Dorsolateral prefrontal cortex (tissue), 120 donors: ENCODE measurements at regions of chr14 and their contacts with region 1.

Region 1: GRCh38 chr14:101964297-101965144 is at the start of gene DYNC1H1:
- DNase-seq: peak; percentile 91 to 97 (median 94)
- H3K4me3 ChIP-seq: peak within 1 kb of the TSS; percentile 75 to 100 (median 98)
- H3K27ac ChIP-seq: peak within 1 kb of the TSS; percentile 82 to 100 (median 97)
- H3K27me3 ChIP-seq: no peaks in the 10 kb centered on the region
- CTCF ChIP-seq: peak in 7 of 56 donors; percentile 5 to 20 (median 10)
- total RNA-seq, gene DYNC1H1: 740 to 1,310 (median 1,110) TPM

Region 2: GRCh38 chr14:100761481-100761880 is 1203.0 kb before region 1 on chr14:
- intact Hi-C with region 1: no loop called
- DNase-seq: no peak
- H3K4me3 ChIP-seq: no peak overlapping the region
- H3K27ac ChIP-seq: no peak overlapping the region
- H3K27me3 ChIP-seq: peaks cover 0 to 19% (median 0%) of the 10 kb centered on the region in 45 donors
- CTCF ChIP-seq: no peak

Region 3: DNA sequence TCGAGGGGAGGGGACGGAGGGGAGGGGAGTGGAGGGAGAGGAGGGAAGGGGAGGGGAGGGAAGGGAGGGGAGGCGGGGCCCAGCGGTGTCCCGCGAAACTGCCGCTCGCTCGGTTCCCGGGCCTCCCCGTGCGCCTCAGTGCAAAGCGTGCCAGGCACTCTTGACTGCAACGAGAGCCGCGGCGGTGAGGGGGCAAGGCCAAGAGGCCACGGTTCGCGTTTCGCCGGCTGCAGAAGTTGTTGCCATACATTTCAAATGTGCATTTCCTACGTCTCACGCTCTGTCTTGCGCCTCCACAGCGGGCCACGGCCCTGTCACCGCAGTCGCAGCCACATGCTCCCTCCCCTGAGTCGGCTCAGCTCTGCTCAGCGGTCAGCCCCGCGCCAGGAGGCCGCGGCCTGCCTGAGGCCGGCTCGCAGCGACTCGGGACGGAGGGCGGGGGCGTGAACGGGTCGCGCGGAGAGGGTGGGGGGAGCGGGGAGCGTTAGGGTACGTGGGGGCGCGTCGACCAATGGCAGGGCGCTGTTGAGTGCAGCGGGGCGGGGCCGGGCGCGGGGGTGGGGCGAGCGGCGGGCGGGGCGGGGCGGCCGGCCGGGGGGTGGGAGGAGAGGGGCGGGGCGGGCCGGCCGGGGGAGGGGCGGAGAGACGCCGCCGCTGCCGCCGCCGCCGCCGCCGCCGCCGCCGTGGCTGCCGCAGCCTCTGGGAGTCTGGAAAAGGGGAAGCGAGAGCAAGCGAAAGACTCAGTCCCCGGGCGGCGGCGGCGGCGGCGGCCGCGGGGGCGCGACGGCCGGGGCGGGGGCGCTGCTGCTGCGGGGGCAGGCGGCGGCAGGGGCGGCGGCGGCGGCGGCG is 203.3 kb before region 1 on chr14 and contains the start of gene PPP2R5C:
- intact Hi-C with region 1: loop called in 1 of 2 experiments (anchors 5 kb)
- DNase-seq: peak; percentile 82 to 93 (median 90)
- H3K4me3 ChIP-seq: peak within 1 kb of the TSS; percentile 74 to 100 (median 97)
- H3K27ac ChIP-seq: peak within 1 kb of the TSS; percentile 68 to 100 (median 96)
- H3K27me3 ChIP-seq: no peaks in the 10 kb centered on the region
- CTCF ChIP-seq: no peak
- total RNA-seq, gene PPP2R5C: 150 to 242 (median 182) TPM

Region 4: DNA sequence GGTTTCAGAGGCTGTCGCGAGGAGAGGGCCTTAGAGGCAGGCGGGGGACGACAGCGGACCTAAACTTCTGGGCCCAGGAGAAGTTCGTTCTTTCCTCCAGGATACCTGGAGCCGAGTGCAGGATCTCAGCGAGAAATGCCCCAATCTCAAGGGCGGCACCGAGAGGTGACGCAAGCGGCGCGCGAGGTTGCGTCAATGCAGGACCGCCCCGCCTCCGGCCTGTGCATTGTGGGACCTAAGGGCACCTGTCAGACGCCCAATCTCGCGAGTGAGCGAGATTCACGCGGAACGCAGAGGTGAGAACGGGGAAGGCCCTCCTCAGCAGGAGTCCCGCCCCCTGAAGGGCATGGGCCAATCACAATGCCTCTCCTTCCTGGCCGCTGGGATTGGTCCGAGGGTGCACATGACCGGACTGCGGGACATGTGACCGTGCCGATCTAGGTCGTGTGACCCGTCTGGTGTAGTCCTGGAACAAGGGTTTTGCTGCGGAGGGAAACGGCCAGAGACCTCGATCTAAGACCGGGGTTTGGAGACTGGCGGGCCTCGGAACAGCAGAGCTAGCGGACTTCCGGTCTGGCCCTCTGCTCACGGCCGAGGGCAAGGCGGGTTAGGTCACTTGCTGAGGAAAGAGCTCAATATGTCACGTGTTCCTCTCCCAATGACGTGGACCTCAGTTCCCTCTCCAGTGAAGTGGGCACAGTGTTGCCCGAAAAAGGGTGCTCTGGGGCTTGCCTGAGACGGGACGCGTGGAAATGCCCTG is 16.4 kb before region 1 on chr14:
- intact Hi-C with region 1: loop called (anchors 1 to 2 kb)
- DNase-seq: peak; percentile 97 to 100 (median 100)
- H3K4me3 ChIP-seq: peak overlapping the region; percentile 65 to 100 (median 87)
- H3K27ac ChIP-seq: peak overlapping the region; percentile 83 to 100 (median 98)
- H3K27me3 ChIP-seq: no peaks in the 10 kb centered on the region
- CTCF ChIP-seq: peak in 26 of 56 donors; percentile 3 to 51 (median 16)

Region 5: DNA sequence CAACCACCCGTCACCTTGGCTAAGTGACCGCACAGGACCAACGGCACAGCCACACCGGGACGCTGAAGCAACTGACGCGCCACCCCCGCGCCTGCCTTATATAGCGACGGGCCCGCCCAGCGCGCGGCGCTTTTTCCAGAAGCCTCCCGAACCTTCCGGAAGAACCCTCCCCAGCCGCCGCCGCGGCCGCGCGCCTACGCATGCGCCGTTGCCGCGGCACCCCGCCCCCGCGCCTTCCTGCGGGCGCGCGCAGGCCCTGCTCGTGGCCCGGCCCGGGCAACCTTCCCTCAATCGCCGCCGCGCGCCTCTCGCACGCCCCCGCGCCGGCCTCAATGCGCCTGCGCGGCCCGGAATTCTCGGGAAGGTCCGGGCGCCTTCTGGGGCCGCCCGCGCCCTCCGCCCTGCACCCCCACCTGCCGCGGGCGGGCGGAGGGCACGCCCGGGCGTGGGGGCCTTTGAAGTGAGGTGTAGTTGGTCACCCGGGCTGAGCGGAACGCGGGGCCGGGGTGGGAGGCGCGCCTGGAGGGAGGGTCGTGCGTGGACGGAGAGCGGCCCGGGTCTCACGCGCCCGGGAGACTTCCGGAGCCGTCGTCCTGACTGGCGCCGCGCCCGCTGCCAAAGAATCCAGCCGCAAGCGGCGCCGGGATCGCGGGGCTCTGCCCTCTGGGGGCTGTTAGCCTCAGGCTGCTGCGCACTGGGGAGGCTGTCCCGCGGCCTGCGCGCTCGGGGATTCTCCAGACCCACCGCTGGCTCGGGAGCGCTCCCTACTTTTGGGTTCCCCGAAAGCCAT is 122.6 kb after region 1 on chr14 and contains the start of gene HSP90AA1:
- intact Hi-C with region 1: loop called (anchors 2 to 5 kb)
- DNase-seq: peak; percentile 85 to 94 (median 90)
- H3K4me3 ChIP-seq: peak within 1 kb of the TSS; percentile 65 to 99 (median 85)
- H3K27ac ChIP-seq: peak within 1 kb of the TSS; percentile 99 to 100 (median 100)
- H3K27me3 ChIP-seq: no peaks in the 10 kb centered on the region
- CTCF ChIP-seq: peak in 47 of 56 donors; percentile 11 to 57 (median 41)
- total RNA-seq, gene HSP90AA1: 420 to 2,880 (median 848) TPM

Region 6: GRCh38 chr14:102509744-102510615 is 545.5 kb after region 1 on chr14 and contains the start of gene ANKRD9:
- intact Hi-C with region 1: loop called in 1 of 2 experiments (anchors 10 kb)
- DNase-seq: peak; percentile 74 to 94 (median 87)
- H3K4me3 ChIP-seq: peak within 1 kb of the TSS; percentile 55 to 83 (median 70)
- H3K27ac ChIP-seq: peak within 1 kb of the TSS in 57 of 59 donors; percentile 45 to 93 (median 86)
- H3K27me3 ChIP-seq: no peaks in the 10 kb centered on the region
- CTCF ChIP-seq: peak in 18 of 56 donors; percentile 8 to 45 (median 21)
- total RNA-seq, gene ANKRD9: 20.1 to 115 (median 36.3) TPM